Gastrocnemius medialis (tissue), 4 donors: ENCODE measurements at regions of chr15 and their contacts with region 1.

Region 1: DNA sequence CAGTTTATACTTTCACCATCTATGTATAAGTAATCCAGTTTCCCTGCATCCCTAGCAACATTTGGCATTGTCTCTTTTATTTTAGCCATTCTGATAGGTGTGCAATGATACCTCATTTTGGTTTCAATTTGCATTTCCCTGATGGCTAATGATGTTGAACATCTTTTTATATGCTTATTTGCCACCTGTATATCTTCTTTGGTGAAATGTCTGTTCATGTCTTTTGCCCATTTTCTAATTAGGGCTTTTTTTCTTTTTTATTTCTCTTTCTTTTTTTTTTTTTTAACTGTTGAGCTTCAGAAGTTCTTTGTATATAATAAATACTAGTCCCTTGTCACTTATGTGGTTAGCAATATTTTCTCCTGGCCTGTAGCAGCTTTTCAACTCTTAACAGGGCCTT is 68.9 kb downstream of the TM2D3 start:
- DNase-seq: no peak
- ATAC-seq: no peak
- H3K4me3 ChIP-seq: no peak overlapping the region
- H3K27ac ChIP-seq: no peak overlapping the region
- H3K4me1 ChIP-seq: no peaks in the 10 kb centered on the region
- H3K27me3 ChIP-seq: no peaks in the 10 kb centered on the region
- CTCF ChIP-seq: no peak
- POLR2A ChIP-seq: no peak

Region 2: GRCh38 chr15:101105059-101105891 is 478.0 kb before region 1 on chr15:
- in situ Hi-C with region 1: no loop called
- intact Hi-C with region 1: no loop called
- DNase-seq: no peak
- ATAC-seq: no peak
- H3K4me3 ChIP-seq: no peak overlapping the region
- H3K27ac ChIP-seq: no peak overlapping the region
- H3K4me1 ChIP-seq: no peaks in the 10 kb centered on the region
- H3K27me3 ChIP-seq: no peaks in the 10 kb centered on the region
- CTCF ChIP-seq: no peak
- POLR2A ChIP-seq: no peak

Region 3: DNA sequence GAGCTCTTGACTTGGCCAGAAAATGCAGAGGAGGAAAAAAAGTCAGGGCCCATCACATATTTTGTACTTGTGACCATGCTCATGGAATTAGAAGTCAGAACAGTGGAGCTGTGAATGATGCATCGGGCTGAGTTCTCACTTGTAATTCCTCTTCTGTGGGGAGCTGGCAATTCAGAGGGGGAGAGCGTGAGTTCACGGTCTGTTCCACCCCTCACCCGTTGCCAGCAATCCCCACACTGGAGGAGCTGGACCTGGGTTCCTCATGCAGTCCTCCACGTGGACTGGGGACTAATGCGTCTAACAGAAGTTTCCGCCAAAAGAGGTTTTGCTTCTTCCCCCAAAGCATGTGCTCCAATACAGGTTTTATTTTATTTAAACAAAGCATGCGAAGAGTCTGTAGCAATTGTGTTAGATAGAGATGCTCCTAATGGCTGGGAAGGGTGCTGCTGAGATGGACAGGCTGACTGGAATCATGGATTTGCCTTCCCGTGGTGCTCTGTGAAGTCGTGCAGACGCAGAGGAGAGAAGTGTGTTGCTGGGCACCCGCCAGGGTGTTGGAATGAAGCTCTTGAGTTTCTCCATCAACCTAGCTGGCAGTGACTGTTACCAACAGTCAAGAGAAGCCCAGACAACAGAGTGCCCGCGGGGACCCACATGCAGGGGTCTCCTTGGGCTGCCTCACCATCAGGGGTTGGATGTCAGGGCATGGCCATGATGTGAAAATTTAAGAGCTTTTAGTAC is 16.4 kb before region 1 on chr15:
- in situ Hi-C with region 1: no loop called
- intact Hi-C with region 1: loop called (anchors 1 kb)
- DNase-seq: no peak
- ATAC-seq: no peak
- H3K4me3 ChIP-seq: no peak overlapping the region
- H3K27ac ChIP-seq: no peak overlapping the region
- H3K4me1 ChIP-seq: no peaks in the 10 kb centered on the region
- H3K27me3 ChIP-seq: no peaks in the 10 kb centered on the region
- CTCF ChIP-seq: no peak
- POLR2A ChIP-seq: no peak